ENCODE measurements at regions of chr17 and their contacts with region 1.

Region 1: GRCh38 chr17:76353599-76354316 is at the start of gene PRPSAP1:
- DNase-seq: peak; percentile 94
- H3K4me3 Mint-ChIP-seq: peak within 1 kb of the TSS; percentile 95
- H3K27ac Mint-ChIP-seq: peak within 1 kb of the TSS; percentile 98
- H3K4me1 Mint-ChIP-seq: peaks cover 8% of the 10 kb centered on the region
- H3K27me3 Mint-ChIP-seq: no peaks in the 10 kb centered on the region
- CTCF ChIP-seq: peak; percentile 35
- total RNA-seq, gene PRPSAP1: 25.9 and 42.3 TPM in 2 replicates

Region 2: DNA sequence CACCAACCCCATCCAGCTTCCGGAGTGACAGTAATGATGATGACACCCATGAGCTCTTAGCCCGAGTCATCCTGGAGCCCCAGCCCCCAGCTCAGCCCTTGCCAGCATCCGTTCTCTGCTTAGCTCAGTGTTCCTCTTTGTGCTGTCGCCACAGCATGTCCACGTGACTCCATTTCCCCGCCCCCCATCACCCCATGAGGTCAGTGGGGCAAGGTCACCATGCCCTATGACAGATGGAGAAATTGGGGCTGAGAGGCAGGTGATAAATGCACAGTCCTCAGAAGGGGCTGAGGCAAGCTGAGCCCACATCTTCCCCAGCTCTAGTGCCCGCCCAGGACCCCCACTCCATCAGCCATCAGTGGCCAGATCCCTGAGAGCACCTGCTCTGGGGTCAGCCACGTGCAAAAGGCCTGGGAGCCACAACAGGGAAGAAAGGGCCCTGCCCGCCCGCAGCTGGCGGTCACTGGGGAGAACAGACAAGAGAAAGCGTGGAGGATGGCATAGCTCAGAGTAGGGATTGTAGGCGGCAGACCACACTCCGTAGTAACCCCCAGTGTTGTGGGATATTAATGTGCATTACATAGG is 615.4 kb before region 1 on chr17:
- CTCF ChIA-PET with region 1: no interaction called
- POLR2A ChIA-PET with region 1: no interaction called
- intact Hi-C with region 1: no loop called
- DNase-seq: no peak
- H3K4me3 Mint-ChIP-seq: no peak overlapping the region
- H3K27ac Mint-ChIP-seq: no peak overlapping the region
- H3K4me1 Mint-ChIP-seq: peaks cover 4% of the 10 kb centered on the region
- H3K27me3 Mint-ChIP-seq: no peaks in the 10 kb centered on the region
- CTCF ChIP-seq: no peak

Region 3: DNA sequence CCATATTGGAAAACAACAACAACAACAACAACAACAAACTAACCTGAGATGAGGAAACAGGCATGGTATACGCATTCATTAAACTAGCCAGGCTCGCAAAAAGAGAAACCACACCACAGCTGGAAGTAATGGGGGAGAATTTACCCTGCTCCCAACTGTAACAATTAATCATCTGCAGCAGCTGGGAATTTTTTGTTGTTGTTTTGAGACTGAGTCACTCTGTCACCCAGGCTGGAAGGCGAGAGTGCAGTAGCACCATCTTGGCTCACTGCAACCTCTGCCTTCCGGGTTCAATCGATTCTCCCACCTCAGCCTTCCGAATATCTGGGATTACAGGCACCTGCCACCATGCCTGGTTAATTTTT is 16.4 kb before region 1 on chr17:
- CTCF ChIA-PET with region 1: interaction called, 3 read pairs
- POLR2A ChIA-PET with region 1: interaction called, 13 read pairs
- intact Hi-C with region 1: no loop called
- DNase-seq: peak; percentile 26
- H3K4me3 Mint-ChIP-seq: no peak overlapping the region
- H3K27ac Mint-ChIP-seq: no peak overlapping the region
- H3K4me1 Mint-ChIP-seq: no peaks in the 10 kb centered on the region
- H3K27me3 Mint-ChIP-seq: no peaks in the 10 kb centered on the region
- CTCF ChIP-seq: no peak

Region 4: GRCh38 chr17:76370261-76370993 is 16.7 kb after region 1 on chr17:
- CTCF ChIA-PET with region 1: interaction called, 10 read pairs
- POLR2A ChIA-PET with region 1: interaction called, 10 read pairs
- intact Hi-C with region 1: no loop called
- DNase-seq: peak; percentile 84
- H3K4me3 Mint-ChIP-seq: no peak overlapping the region
- H3K27ac Mint-ChIP-seq: no peak overlapping the region
- H3K4me1 Mint-ChIP-seq: peaks cover 15% of the 10 kb centered on the region
- H3K27me3 Mint-ChIP-seq: no peaks in the 10 kb centered on the region
- CTCF ChIP-seq: peak; percentile 79

Region 5: GRCh38 chr17:76397687-76398487 is 44.1 kb after region 1 on chr17:
- CTCF ChIA-PET with region 1: interaction called, 20 read pairs
- POLR2A ChIA-PET with region 1: interaction called, 3 read pairs
- intact Hi-C with region 1: no loop called
- DNase-seq: peak; percentile 81
- H3K4me3 Mint-ChIP-seq: no peak overlapping the region
- H3K27ac Mint-ChIP-seq: no peak overlapping the region
- H3K4me1 Mint-ChIP-seq: peaks cover 5% of the 10 kb centered on the region
- H3K27me3 Mint-ChIP-seq: no peaks in the 10 kb centered on the region
- CTCF ChIP-seq: peak; percentile 95